ENCODE measurements at regions of chr1 and their contacts with region 1.

Region 1: DNA sequence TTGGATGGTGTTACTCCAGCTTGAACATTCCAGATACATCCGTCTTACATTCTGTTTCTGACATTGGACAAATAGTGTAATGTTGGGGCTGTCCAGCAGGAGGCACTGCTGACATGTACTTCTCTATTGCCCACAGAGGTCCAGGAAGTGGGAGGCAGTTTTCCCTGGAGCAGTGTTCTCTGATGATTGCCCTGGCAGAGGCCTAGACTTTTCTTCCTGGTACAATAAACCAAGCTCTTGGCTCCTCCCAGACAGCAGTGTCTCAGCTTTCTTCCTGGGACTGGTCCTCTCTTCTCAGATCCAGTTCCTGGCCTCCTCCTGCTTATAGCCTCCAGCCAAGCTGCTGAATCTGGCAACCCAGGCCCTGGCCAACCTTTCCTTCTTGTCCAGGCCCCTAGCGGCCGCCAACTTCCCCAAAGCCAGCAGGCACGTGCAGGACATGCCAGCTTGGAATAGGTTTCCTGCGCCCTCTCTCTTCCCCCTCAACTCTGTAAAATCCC is 14.9 kb upstream of the IFNLR1 start:
- DNase-seq: peak; percentile 37 to 55 (median 43)
- H3K4me3 ChIP-seq: no peak overlapping the region
- H3K27ac ChIP-seq: no peak overlapping the region
- H3K4me1 ChIP-seq: peaks cover 0 to 3% (median 0%) of the 10 kb centered on the region in 4 experiments
- H3K27me3 ChIP-seq: peaks cover 0 to 4% (median 0%) of the 10 kb centered on the region in 5 experiments

Region 2: GRCh38 chr1:24186993-24187805 is 14.8 kb before region 1 on chr1 and contains the start of gene IFNLR1:
- CTCF ChIA-PET with region 1: interaction called, 27 read pairs
- POLR2A ChIA-PET with region 1: no interaction called
- DNase-seq: peak in 2 of 3 donors; percentile 24 to 41
- H3K4me3 ChIP-seq: peak within 1 kb of the TSS in 6 of 7 experiments; percentile 34 to 72 (median 48)
- H3K27ac ChIP-seq: no peak within 1 kb of the TSS
- H3K4me1 ChIP-seq: peaks cover 8 to 26% (median 21%) of the 10 kb centered on the region in 4 experiments
- H3K27me3 ChIP-seq: peaks cover 0 to 44% (median 23%) of the 10 kb centered on the region in 5 experiments

Region 3: GRCh38 chr1:24253569-24253968 is 51.6 kb after region 1 on chr1:
- CTCF ChIA-PET with region 1: no interaction called
- POLR2A ChIA-PET with region 1: no interaction called
- DNase-seq: no peak
- H3K4me3 ChIP-seq: no peak overlapping the region
- H3K27ac ChIP-seq: no peak overlapping the region
- H3K4me1 ChIP-seq: no peaks in the 10 kb centered on the region
- H3K27me3 ChIP-seq: no peaks in the 10 kb centered on the region

Region 4: GRCh38 chr1:24385160-24385940 is 183.4 kb after region 1 on chr1:
- CTCF ChIA-PET with region 1: interaction called, 244 read pairs
- POLR2A ChIA-PET with region 1: no interaction called
- DNase-seq: peak in 2 of 3 donors; percentile 26 to 38
- H3K4me3 ChIP-seq: no peak overlapping the region
- H3K27ac ChIP-seq: no peak overlapping the region
- H3K4me1 ChIP-seq: no peaks in the 10 kb centered on the region
- H3K27me3 ChIP-seq: no peaks in the 10 kb centered on the region

Region 5: GRCh38 chr1:24491577-24492360 is 289.8 kb after region 1 on chr1:
- CTCF ChIA-PET with region 1: no interaction called
- POLR2A ChIA-PET with region 1: no interaction called
- DNase-seq: peak in 1 of 3 donors; percentile 10
- H3K4me3 ChIP-seq: no peak overlapping the region
- H3K27ac ChIP-seq: no peak overlapping the region
- H3K4me1 ChIP-seq: peaks cover 0 to 1% (median 0%) of the 10 kb centered on the region in 4 experiments
- H3K27me3 ChIP-seq: no peaks in the 10 kb centered on the region

Measured in common myeloid progenitor, CD34-positive (primary cell).